ENCODE measurements at regions of chr5 and their contacts with region 1.

Region 1: DNA sequence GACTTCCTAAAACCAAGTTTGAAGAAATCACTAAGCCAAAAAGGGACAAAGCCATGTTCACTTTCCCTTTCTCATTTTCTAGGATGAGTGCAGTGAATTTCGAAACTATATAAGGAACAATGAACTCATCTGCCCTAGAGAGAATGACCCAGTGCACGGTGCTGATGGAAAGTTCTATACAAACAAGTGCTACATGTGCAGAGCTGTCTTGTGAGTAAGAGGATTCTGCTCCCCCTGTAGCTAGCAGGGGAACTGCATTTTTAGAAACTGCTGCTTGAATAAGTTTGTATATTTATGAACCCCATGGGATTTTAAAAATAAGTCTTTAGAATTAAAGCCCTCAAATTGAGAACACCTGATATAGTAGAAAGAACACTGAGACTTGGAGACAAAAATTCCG is 42.7 kb upstream of the SPINK14 start:
- DNase-seq: peak; percentile 5
- H3K4me3 ChIP-seq: no peak overlapping the region
- H3K27ac ChIP-seq: no peak overlapping the region
- H3K4me1 ChIP-seq: no peaks in the 10 kb centered on the region
- H3K27me3 ChIP-seq: no peaks in the 10 kb centered on the region
- CTCF ChIP-seq: peak in 1 of 2 donors; percentile 9
- POLR2A ChIP-seq: no peak

Region 2: DNA sequence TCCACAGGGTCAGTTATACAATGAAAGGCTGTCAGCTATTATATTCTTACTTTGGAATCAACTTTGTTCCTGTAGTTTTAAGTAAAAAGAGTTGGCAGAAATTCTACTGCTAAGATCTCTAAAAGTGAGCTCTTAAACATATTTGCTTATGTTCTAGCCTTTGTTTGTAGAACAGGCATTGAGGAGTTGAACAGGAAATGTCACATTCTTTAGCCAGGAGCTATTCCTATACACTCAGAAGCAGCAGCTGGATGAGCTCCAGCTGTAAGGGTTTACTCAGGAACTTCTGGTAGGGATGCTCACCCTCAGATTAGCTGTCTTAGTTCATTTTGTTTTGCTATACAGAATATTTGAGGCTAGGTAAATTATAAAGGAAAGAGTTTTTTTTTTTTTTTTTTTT is 20.3 kb after region 1 on chr5:
- CTCF ChIA-PET with region 1: interaction called, 10 read pairs
- POLR2A ChIA-PET with region 1: interaction called, 3 read pairs
- dilution Hi-C with region 1: no loop called
- intact Hi-C with region 1: no loop called
- DNase-seq: peak; percentile 90
- H3K4me3 ChIP-seq: no peak overlapping the region
- H3K27ac ChIP-seq: peak overlapping the region; percentile 22
- H3K4me1 ChIP-seq: peaks cover 22% of the 10 kb centered on the region
- H3K27me3 ChIP-seq: no peaks in the 10 kb centered on the region
- CTCF ChIP-seq: no peak
- POLR2A ChIP-seq: no peak

Region 3: DNA sequence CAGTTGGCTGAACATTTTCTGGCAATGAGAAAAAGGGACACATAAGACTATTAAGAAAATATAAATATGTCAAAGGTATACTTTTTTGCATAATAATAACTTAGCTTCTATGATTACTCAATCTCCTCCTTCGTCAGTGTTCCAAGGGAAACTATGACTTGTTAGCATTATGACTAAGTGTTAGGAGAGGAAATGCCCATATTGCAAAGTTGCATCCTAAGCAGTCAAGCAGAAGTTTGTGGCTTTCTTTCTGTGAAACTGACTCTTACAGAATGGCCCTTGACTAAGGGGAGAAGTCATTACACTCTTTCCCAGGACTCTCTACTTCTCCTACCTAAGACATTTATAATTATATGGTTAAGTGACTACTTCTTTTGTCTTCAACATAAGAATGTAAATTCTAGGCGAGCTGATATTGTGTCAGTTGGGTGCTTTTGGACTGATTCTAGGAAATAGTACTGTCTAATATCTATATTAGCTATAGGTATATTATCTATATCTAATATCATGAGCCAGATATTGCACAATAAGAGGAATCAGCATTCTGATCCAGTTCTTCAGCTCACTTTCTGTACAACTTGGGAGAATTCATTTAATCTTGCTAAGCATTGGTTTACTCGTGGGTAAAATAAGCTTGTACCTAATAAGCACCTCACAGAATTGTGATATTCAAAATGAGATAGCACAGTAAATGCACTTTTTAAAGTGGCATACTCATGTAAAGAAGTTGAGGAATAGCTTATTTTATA is 60.8 kb after region 1 on chr5:
- CTCF ChIA-PET with region 1: no interaction called
- POLR2A ChIA-PET with region 1: no interaction called
- dilution Hi-C with region 1: no loop called
- intact Hi-C with region 1: no loop called
- DNase-seq: peak; percentile 84
- H3K4me3 ChIP-seq: no peak overlapping the region
- H3K27ac ChIP-seq: peak overlapping the region; percentile 18
- H3K4me1 ChIP-seq: peaks cover 22% of the 10 kb centered on the region
- H3K27me3 ChIP-seq: no peaks in the 10 kb centered on the region
- CTCF ChIP-seq: no peak
- POLR2A ChIP-seq: no peak

Measured in endothelial cell of umbilical vein (primary cell).